Aorta (tissue), 5 donors: ENCODE measurements at regions of chr2 and their contacts with region 1.

Region 1: GRCh38 chr2:197804049-197804757 is at the start of gene PLCL1:
- DNase-seq: peak; percentile 96 to 97
- ATAC-seq: peak; percentile 94
- H3K4me3 ChIP-seq: peak within 1 kb of the TSS; percentile 62 to 99
- H3K27ac ChIP-seq: peak within 1 kb of the TSS; percentile 1 to 37
- H3K4me1 ChIP-seq: peaks cover 0 to 8% of the 10 kb centered on the region in 2 donors
- H3K27me3 ChIP-seq: no peaks in the 10 kb centered on the region
- total RNA-seq, gene PLCL1: 11.6 to 14.8 TPM

Region 2: GRCh38 chr2:197972061-197972460 is 167.9 kb after region 1 on chr2:
- intact Hi-C with region 1: loop called (anchors 5 to 10 kb)
- DNase-seq: no peak
- ATAC-seq: peak; percentile 54
- H3K4me3 ChIP-seq: no peak overlapping the region
- H3K27ac ChIP-seq: no peak overlapping the region
- H3K4me1 ChIP-seq: peaks cover 4 to 12% of the 10 kb centered on the region in 2 donors
- H3K27me3 ChIP-seq: no peaks in the 10 kb centered on the region

Region 3: DNA sequence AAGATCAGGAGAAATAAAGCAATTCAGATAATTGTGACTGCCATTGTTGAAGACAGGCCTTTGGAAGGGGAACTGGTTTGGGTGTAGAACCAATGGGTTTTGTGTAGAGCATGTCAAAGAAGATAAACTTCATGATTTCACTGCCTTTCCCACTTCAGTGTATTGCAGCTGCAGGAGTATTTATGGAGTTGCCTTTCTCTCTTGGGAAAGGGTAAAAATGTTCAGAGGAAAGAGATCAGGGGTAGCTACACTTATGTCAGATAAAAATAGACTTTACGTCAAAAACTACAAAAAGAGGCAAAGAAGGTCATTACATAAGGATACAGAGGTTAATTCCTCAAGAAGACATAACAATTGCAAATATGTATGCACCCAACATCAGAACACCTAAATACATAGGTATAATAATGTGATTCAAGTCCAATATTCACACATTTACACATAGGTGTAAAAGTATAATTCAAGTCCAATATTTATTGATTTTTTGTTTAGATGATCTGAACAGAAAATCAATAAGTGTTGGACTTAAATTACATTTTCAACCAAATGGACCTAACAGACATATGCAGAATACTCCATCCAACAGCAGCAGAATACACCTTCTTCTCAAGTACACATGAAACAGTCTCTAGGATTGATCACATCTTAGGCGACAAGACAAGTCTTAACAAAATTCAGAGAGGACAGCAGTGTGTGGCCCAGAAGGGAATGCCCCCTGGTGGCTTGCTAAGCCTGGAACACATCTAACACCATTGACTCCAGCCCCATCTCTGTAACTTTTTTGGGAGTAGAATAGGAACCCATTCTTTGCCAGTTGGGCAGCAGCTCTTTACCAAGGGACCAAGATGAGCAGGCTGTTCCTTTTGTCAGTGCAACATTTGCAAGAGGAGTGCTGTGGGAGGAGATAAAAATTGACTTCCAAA is 249.8 kb after region 1 on chr2:
- intact Hi-C with region 1: loop called in 1 of 2 experiments (anchors 10 kb)
- DNase-seq: peak in 1 of 2 donors; percentile 50
- ATAC-seq: peak; percentile 47
- H3K4me3 ChIP-seq: no peak overlapping the region
- H3K27ac ChIP-seq: no peak overlapping the region
- H3K4me1 ChIP-seq: peaks cover 3 to 10% of the 10 kb centered on the region in 2 donors
- H3K27me3 ChIP-seq: no peaks in the 10 kb centered on the region

Region 4: DNA sequence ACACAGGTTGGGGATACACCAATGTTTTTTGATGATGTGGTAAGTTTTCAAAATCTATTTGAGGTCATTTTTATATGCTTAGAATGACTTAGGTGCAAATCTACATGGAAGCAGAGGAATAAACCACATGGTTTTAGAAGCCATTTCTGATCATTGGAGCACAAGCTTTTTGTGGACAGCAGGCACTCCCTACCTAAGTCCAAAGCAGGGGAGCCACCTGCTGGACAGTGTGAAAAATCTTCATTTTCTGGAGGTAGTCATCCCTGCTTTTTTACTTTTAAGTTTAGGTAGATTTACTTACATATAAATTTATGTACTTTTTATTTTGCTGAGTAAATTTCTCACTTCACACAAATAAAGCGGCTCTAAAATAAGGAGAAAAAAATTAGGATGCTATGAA is 323.4 kb after region 1 on chr2:
- intact Hi-C with region 1: loop called (anchors 1 to 2 kb)
- DNase-seq: peak in 1 of 2 donors; percentile 70
- ATAC-seq: peak; percentile 84
- H3K4me3 ChIP-seq: no peak overlapping the region
- H3K27ac ChIP-seq: no peak overlapping the region
- H3K4me1 ChIP-seq: peaks cover 0 to 3% of the 10 kb centered on the region in 2 donors
- H3K27me3 ChIP-seq: no peaks in the 10 kb centered on the region

Region 5: DNA sequence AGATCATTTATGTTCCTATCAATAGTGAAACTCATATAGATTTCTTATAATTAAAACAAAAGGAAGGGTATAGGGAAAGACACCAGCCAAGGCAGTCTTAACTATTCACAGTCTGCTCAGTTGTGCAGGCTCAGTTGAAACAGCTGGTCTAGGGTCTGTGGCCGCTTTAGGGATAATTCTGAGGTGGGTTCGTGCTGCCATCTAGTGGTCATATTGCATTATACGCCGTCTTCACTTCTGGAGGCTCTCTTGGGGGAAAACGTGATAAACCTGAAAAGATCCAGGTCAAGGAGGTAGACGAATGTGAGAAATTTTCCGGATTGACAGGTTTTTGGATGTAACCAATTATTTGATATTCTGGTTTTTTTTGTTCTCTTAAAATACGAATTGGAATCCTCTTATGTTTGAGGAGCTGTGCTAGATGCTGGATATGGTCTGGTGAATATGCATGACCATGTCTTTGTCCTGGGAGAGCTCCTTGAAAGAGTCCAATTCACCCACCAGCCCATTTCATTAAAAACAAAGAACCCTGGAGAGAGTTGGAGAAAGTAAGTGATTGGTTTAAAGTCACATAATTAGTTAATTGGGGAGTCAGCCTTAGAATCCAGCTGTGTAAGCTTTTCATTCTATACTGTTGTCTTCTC is 492.6 kb after region 1 on chr2:
- intact Hi-C with region 1: loop called (anchors 2 kb)
- DNase-seq: no peak
- ATAC-seq: peak; percentile 79
- H3K4me3 ChIP-seq: no peak overlapping the region
- H3K27ac ChIP-seq: no peak overlapping the region
- H3K4me1 ChIP-seq: no peaks in the 10 kb centered on the region
- H3K27me3 ChIP-seq: no peaks in the 10 kb centered on the region